HCT116 (cell line): ENCODE measurements at regions of chr19 and their contacts with region 1.

Region 1: GRCh38 chr19:39412100-39412866 is at the start of gene PLEKHG2:
- DNase-seq: peak; percentile 98
- ATAC-seq: peak; percentile 65
- H3K4me3 ChIP-seq: peak within 1 kb of the TSS; percentile 90 to 98
- H3K27ac ChIP-seq: peak within 1 kb of the TSS; percentile 100
- H3K4me1 ChIP-seq: peaks cover 33 to 65% of the 10 kb centered on the region in 2 experiments
- H3K27me3 ChIP-seq: no peaks in the 10 kb centered on the region
- CTCF ChIP-seq: peak in 1 of 3 experiments; percentile 81; a peak in 3 of 6 replicates
- POLR2A ChIP-seq: peak; percentile 9
- RAD21 ChIP-seq: no peak
- total RNA-seq, gene PLEKHG2: 29.0 TPM

Region 2: DNA sequence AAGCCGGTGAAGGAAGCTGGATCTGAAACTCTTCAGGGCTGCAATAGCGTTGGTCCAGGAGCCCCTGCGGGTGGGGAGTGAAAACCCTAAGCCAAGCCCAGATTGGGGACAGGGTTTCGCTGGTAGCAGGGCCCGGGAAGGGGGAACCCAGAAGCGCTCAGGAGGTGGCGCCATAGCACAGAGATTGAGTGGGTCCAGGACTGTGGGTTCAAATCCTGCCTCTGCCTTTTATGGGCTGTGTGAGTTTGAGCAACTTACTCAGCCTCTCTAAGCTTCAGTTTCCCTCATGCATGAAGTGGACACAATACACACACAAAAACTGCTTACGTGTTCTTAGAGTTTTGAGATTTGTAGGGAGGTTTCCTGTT is 199.9 kb before region 1 on chr19:
- CTCF ChIA-PET with region 1: no interaction called
- POLR2A ChIA-PET with region 1: no interaction called
- RAD21 ChIA-PET with region 1: no interaction called
- intact Hi-C with region 1: loop called (anchors 1 kb)
- DNase-seq: peak; percentile 53
- ATAC-seq: peak; percentile 97
- H3K4me3 ChIP-seq: no peak overlapping the region
- H3K27ac ChIP-seq: no peak overlapping the region
- H3K4me1 ChIP-seq: peaks cover 9 to 12% of the 10 kb centered on the region in 2 experiments; a peak in 3 of 4 replicates
- H3K27me3 ChIP-seq: no peaks in the 10 kb centered on the region
- CTCF ChIP-seq: peak; percentile 68 to 96 (median 85)
- POLR2A ChIP-seq: no peak
- RAD21 ChIP-seq: peak; percentile 98

Region 3: GRCh38 chr19:39341719-39342604 is 70.3 kb before region 1 on chr19 and contains the start of gene SAMD4B:
- CTCF ChIA-PET with region 1: interaction called, 5 read pairs
- POLR2A ChIA-PET with region 1: interaction called, 4 read pairs
- RAD21 ChIA-PET with region 1: no interaction called
- intact Hi-C with region 1: loop called (anchors 5 kb)
- DNase-seq: peak; percentile 93
- ATAC-seq: peak; percentile 92
- H3K4me3 ChIP-seq: peak within 1 kb of the TSS; percentile 91 to 92
- H3K27ac ChIP-seq: peak within 1 kb of the TSS; percentile 86
- H3K4me1 ChIP-seq: peaks cover 8 to 27% of the 10 kb centered on the region in 2 experiments
- H3K27me3 ChIP-seq: no peaks in the 10 kb centered on the region
- CTCF ChIP-seq: peak; percentile 26 to 67 (median 45); a peak in 3 of 6 replicates
- POLR2A ChIP-seq: peak; percentile 91
- RAD21 ChIP-seq: no peak
- total RNA-seq, gene SAMD4B: 127 TPM

Region 4: DNA sequence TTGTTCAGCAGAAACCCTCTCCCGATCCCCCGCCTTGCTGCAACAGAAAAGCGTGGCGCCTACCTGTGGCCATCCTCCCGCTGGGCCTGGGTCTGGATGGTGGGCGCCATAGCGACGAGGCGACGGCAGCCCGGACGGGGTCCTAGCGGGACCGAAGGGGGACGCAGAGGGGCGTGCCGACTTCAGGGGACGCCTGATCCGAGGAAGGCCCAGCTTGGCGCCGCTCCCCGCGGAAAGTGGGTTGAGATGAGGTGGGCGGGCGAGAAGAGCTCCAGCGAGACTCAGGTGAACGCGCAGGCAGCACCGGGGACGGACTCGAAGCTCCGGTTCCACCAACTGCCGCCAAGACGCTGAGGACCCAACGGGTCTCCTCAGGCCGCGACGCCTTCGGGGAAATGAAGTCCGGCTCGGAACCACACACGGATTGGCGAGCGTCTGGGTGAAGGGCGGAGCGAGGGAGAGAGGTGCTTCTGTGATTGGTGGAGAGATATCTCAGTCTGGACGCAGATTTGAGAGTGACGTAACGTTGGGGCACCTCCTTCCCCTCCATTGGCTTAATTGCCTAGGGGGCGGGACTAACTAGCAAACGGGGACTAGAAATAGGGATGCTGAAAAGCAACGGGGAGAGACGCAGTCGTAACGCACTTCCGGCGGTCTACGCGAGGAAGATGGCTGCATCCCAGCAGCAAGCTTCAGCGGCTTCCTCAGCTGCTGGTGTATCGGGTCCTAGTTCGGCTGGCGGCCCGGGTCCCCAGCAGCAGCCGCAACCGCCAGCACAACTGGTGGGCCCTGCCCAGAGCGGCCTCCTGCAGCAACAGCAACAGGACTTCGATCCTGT is 21.3 kb before region 1 on chr19 and contains the starts of genes MED29 and PAF1:
- CTCF ChIA-PET with region 1: interaction called, 8 read pairs
- POLR2A ChIA-PET with region 1: interaction called, 39 read pairs
- RAD21 ChIA-PET with region 1: interaction called, 4 to 21 read pairs
- intact Hi-C with region 1: loop called (anchors 1 kb)
- DNase-seq: peak; percentile 99
- ATAC-seq: peak; percentile 94
- H3K4me3 ChIP-seq: peak within 1 kb of the TSS; percentile 91 to 100
- H3K27ac ChIP-seq: peak within 1 kb of the TSS; percentile 96
- H3K4me1 ChIP-seq: peaks cover 14% of the 10 kb centered on the region in 2 experiments
- H3K27me3 ChIP-seq: no peaks in the 10 kb centered on the region
- CTCF ChIP-seq: no peak
- POLR2A ChIP-seq: peak; percentile 97
- RAD21 ChIP-seq: no peak
- total RNA-seq, gene MED29: 32.0 TPM
- total RNA-seq, gene PAF1: 53.5 TPM

Region 5: GRCh38 chr19:39397360-39398296 is 14.7 kb before region 1 on chr19:
- CTCF ChIA-PET with region 1: interaction called, 51 read pairs
- POLR2A ChIA-PET with region 1: interaction called, 57 read pairs
- RAD21 ChIA-PET with region 1: interaction called, 14 to 21 read pairs
- intact Hi-C with region 1: loop called (anchors 1 kb)
- DNase-seq: peak; percentile 72
- ATAC-seq: peak; percentile 74
- H3K4me3 ChIP-seq: peak overlapping the region in 1 of 2 experiments; percentile 3; a peak in 2 of 4 replicates
- H3K27ac ChIP-seq: peak overlapping the region; percentile 91
- H3K4me1 ChIP-seq: peaks cover 36 to 58% of the 10 kb centered on the region in 2 experiments
- H3K27me3 ChIP-seq: no peaks in the 10 kb centered on the region
- CTCF ChIP-seq: peak in 2 of 3 experiments; percentile 91 to 98; a peak in 4 of 6 replicates
- POLR2A ChIP-seq: no peak
- RAD21 ChIP-seq: no peak

Region 6: DNA sequence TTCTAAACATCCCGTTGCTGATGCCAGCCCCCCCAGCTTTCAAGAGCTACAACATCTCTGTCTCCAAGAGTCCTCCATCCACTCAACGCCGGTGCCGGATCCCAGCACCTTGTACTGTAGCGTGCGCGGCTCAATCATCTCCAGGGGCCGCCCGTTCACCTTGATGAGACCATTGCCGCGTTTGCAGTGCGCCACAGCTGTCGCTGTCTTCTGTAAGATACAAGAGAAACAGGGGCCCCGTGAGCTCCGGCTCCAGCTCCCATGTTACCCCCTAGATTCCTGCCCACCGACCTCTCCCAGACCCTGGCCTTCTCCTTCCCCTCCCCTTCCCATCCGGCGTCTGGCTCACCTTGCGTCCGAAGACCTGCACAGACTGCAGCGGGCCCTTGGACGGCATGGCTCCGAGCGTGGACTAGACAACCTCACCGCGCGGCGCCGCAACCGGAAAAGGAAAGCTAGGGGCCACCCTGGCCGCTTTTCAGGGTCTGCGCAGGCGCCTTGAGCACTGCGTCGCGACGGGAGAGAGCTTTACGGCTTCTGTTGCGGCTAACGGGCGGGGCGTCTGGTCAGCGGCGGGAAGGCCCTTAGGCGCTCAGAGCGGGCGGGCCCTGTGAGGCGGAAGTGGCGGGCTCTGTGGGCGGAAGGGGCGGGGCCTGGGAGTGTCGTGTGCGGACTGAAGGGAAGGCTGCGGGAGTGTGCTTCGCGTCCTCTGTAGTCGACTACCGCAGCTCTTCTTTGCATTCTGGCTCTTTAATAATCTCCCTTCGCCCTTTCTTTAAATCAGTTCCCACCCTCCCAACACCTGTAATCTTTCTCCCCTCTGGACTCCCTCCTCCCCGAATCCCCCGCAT is 23.4 kb after region 1 on chr19 and contains the start of gene RPS16:
- CTCF ChIA-PET with region 1: interaction called, 5 read pairs
- POLR2A ChIA-PET with region 1: interaction called, 17 read pairs
- RAD21 ChIA-PET with region 1: interaction called in 1 of 2 experiments, 3 read pairs
- intact Hi-C with region 1: no loop called
- DNase-seq: peak; percentile 92
- ATAC-seq: peak; percentile 81
- H3K4me3 ChIP-seq: peak within 1 kb of the TSS; percentile 98 to 99
- H3K27ac ChIP-seq: peak within 1 kb of the TSS; percentile 84
- H3K4me1 ChIP-seq: peaks cover 34 to 72% of the 10 kb centered on the region in 2 experiments
- H3K27me3 ChIP-seq: no peaks in the 10 kb centered on the region
- CTCF ChIP-seq: no peak
- POLR2A ChIP-seq: peak; percentile 96
- RAD21 ChIP-seq: no peak
- total RNA-seq, gene RPS16: 3,365 TPM

Region 7: GRCh38 chr19:39463403-39463802 is 51.1 kb after region 1 on chr19:
- CTCF ChIA-PET with region 1: no interaction called
- POLR2A ChIA-PET with region 1: no interaction called
- RAD21 ChIA-PET with region 1: no interaction called
- intact Hi-C with region 1: no loop called
- DNase-seq: no peak
- ATAC-seq: no peak
- H3K4me3 ChIP-seq: no peak overlapping the region
- H3K27ac ChIP-seq: no peak overlapping the region
- H3K4me1 ChIP-seq: no peaks in the 10 kb centered on the region
- H3K27me3 ChIP-seq: no peaks in the 10 kb centered on the region
- CTCF ChIP-seq: no peak
- POLR2A ChIP-seq: no peak
- RAD21 ChIP-seq: no peak

Region 8: DNA sequence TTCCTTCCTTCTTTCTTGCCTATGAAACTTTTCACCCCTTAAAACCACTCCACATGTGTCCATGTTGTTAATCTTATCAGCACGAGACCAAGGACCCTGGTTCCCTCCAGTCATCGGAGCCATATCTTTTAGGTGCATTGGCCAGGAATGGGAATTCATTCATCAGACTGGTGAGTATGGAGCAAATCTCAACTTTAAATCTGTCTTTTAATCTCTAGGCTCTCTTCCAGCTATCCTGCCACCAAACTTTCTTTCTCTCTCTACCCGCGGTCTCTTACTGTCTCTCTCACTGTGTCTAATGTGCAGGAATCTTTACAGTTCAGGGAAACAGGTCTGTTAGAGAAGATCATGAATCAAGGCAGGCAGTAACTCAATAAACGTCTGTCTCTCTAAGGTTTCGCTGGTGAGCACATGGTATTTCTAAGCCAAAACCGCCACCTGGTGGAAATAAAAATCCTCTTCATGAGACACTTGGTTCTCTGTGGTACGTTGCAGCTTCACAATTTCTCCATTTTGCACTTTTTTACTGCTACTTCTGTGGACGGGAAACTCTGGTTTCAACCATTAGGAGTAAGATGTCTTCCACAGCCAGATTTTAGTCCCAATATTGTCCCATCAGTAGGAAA is 259.6 kb after region 1 on chr19:
- CTCF ChIA-PET with region 1: no interaction called
- POLR2A ChIA-PET with region 1: no interaction called
- RAD21 ChIA-PET with region 1: no interaction called
- intact Hi-C with region 1: loop called (anchors 1 kb)
- DNase-seq: peak; percentile 66
- ATAC-seq: peak; percentile 96
- H3K4me3 ChIP-seq: no peak overlapping the region
- H3K27ac ChIP-seq: no peak overlapping the region
- H3K4me1 ChIP-seq: peaks cover 0 to 6% of the 10 kb centered on the region in 2 experiments; a peak in 1 of 4 replicates
- H3K27me3 ChIP-seq: 0 out of 2 replicates have a peak, but pooled peaks cover 3% of the 10 kb centered on the region
- CTCF ChIP-seq: peak; percentile 45 to 75 (median 62); a peak in 4 of 6 replicates
- POLR2A ChIP-seq: no peak
- RAD21 ChIP-seq: peak; percentile 92